ENCODE measurements at regions of chr1 and their contacts with region 1.

Region 1: GRCh38 chr1:145891587-145892485 is 6.2 kb upstream of the ANKRD35 start:
- DNase-seq: peak; percentile 97 to 99
- H3K4me3 ChIP-seq: peak overlapping the region; percentile 27; the same call in 1 of the 2 replicates
- H3K27ac ChIP-seq: peak overlapping the region; percentile 65
- H3K4me1 ChIP-seq: peaks cover 52% of the 10 kb centered on the region
- H3K27me3 ChIP-seq: no peaks in the 10 kb centered on the region
- CTCF ChIP-seq: peak; percentile 95

Region 2: DNA sequence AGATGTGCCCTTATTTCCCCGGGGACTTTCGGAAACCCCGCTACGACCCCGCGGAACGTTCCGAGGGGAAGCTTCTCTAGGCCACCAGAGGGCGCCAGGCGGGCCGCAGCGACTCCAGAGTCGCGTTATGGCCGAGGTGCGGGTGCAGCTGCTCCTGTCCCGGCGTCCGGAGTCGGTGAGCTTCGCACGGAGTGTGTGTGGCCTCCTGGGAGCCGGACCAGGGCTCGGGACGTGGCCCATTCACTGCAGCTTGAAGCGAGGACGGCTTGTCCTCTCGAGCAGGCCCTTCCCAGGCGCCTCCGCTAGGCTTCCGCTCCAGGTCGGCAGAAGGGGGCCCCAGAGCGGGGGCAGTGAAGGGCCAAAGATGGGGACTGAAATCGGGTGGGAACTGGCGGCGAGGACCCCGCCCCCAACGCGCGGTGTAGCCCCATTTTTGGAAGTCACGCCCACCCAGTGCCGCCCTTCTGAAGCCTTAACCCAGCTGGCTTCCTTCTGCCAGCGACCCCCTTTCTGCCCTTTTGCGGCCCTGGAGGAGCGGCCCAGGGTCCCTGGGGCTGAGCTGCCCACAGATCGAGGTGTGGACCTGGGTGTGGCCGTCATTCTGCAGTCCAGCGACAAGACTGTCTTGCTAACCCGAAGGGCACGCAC is 46.2 kb before region 1 on chr1 and contains the start of gene NUDT17:
- CTCF ChIA-PET with region 1: interaction called, 16 read pairs
- POLR2A ChIA-PET with region 1: interaction called, 6 read pairs
- intact Hi-C with region 1: loop called (anchors 1 kb)
- DNase-seq: peak; percentile 48 to 67
- H3K4me3 ChIP-seq: peak within 1 kb of the TSS; percentile 63
- H3K27ac ChIP-seq: no peak within 1 kb of the TSS
- H3K4me1 ChIP-seq: peaks cover 3% of the 10 kb centered on the region; the same call in 1 of the 2 replicates
- H3K27me3 ChIP-seq: no peaks in the 10 kb centered on the region
- CTCF ChIP-seq: peak; percentile 92
- total RNA-seq, gene NUDT17: 1.0 and 1.5 TPM in 2 replicates

Region 3: DNA sequence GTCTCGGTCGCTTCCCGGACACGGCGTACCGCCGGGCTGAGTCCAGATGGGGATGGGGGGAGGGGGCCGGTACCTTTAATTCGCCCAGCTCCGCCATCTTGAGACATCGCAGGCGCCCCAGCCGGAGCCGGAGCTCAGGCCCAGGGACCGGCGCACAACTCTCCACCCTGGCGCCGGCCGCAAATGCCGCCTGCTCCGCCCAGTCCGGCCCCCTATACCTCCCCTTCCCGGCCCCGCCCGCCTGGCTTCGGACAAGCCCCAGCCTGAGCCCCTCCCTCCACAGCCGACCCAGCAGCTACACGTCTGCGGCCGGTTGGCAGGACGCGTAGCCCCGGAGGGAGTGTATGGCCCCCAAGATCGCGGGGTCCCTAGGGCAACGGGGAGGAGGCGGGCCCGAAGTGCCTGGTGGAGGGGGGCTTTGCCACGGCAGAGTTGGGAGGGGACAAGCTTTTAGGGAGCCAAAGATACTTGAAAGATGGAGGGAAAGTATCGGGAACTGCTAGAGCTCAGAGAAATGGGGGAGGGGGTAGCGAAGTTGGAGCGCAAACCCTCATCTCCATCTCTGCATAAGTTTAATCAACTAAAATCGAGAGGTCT is 32.8 kb before region 1 on chr1 and contains the start of gene PIAS3:
- CTCF ChIA-PET with region 1: interaction called, 29 read pairs
- POLR2A ChIA-PET with region 1: interaction called, 19 read pairs
- intact Hi-C with region 1: loop called (anchors 1 kb)
- DNase-seq: peak; percentile 81 to 95
- H3K4me3 ChIP-seq: peak within 1 kb of the TSS; percentile 93
- H3K27ac ChIP-seq: peak within 1 kb of the TSS; percentile 23; the same call in 1 of the 2 replicates
- H3K4me1 ChIP-seq: peaks cover 8% of the 10 kb centered on the region
- H3K27me3 ChIP-seq: no peaks in the 10 kb centered on the region
- CTCF ChIP-seq: no peak
- total RNA-seq, gene PIAS3: 44.3 and 57.8 TPM in 2 replicates

Region 4: DNA sequence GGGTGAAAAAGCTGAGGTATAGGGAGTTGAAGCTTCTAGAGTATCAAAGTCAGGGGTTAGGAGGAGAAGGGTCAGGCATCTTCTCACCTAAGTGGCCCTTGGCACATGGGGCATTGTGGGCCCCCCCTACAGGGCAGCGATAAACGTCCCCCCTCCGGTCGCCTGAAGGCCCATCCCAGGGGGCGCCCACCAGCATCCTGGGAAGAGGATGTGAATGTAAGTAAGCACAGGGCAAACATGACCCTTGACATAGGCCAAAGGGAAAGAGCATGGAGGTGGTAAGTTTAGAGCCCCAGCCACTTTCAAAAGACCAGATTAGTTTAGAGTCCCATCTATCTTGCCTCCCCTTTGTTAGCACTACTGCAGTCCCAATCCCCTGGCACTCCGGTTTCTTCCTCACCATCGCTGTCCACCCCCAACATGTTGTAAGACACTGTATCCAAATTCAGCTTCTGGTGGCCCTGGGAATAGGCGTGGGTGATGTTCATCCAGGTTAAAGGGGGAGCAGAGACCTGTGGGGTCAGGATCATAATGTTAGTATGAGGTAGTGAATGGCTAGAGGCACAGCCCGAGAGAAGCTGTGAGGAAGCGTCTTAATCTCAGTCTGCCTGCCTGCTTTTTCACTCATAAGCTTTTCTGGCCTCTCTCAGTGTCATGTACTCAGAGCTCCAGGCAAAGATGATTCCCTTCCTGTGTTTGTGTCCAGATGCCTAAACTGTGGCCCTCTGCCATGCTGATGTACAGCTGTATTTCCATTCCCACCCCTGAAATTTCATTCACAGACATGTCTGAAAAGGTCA is 15.3 kb after region 1 on chr1:
- CTCF ChIA-PET with region 1: interaction called, 24 read pairs
- POLR2A ChIA-PET with region 1: no interaction called
- intact Hi-C with region 1: loop called (anchors 1 kb)
- DNase-seq: no peak
- H3K4me3 ChIP-seq: no peak overlapping the region
- H3K27ac ChIP-seq: no peak overlapping the region
- H3K4me1 ChIP-seq: 0 out of 2 replicates have a peak, but pooled peaks cover 3% of the 10 kb centered on the region
- H3K27me3 ChIP-seq: no peaks in the 10 kb centered on the region
- CTCF ChIP-seq: no peak

Region 5: DNA sequence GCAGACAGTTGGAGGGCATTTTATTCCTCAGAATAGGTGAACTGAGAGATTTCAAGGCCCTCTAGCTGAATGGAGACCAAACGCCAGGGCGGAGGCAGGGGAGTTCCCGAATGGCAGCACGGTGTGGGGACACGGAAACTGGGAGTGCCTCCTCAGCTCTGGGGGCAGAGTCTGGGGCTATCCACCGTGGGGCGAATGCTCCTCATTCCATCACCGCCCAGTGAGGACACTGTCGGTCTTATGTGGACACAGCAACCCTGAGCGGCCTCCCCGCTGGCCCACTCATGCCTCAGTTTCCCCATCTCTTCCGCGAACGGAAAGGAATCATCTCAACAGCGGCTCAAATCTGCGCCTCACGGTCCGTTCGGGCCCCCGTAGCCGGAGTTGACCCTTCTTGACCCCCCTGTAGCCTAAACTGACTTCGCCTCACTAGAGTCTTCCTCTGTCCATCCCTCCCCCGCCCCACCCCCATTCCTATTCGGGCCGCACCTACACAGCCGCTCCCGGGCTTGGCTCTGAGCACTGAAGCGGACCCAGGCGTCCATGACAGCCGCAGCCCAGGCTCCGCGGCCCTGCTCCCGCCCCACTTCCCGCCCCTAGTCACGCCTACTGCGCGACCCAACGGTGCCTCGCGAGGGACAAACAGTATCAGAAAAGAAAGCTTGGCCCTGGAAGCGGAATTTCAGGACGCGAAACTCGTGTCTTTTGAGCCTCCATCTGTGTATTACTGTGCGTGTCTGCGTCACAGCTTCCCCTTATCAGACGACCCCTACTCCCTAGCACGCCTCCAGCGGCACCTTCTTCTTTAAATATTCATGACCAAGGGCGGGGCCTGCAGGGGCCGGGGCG is 26.5 kb after region 1 on chr1 and contains the start of gene PEX11B:
- CTCF ChIA-PET with region 1: interaction called, 4 read pairs
- POLR2A ChIA-PET with region 1: no interaction called
- intact Hi-C with region 1: loop called (anchors 1 kb)
- DNase-seq: peak; percentile 66 to 83
- H3K4me3 ChIP-seq: peak within 1 kb of the TSS; percentile 80
- H3K27ac ChIP-seq: peak within 1 kb of the TSS; percentile 64
- H3K4me1 ChIP-seq: peaks cover 11% of the 10 kb centered on the region
- H3K27me3 ChIP-seq: no peaks in the 10 kb centered on the region
- CTCF ChIP-seq: no peak
- total RNA-seq, gene PEX11B: 19.7 and 19.8 TPM in 2 replicates

Region 6: GRCh38 chr1:145963995-145964901 is 72.4 kb after region 1 on chr1 and contains the starts of genes ANKRD34A and POLR3GL:
- CTCF ChIA-PET with region 1: interaction called, 3 read pairs
- POLR2A ChIA-PET with region 1: interaction called, 10 read pairs
- intact Hi-C with region 1: no loop called
- DNase-seq: peak; percentile 88 to 92
- H3K4me3 ChIP-seq: peak within 1 kb of the TSS; percentile 65
- H3K27ac ChIP-seq: peak within 1 kb of the TSS; percentile 8; the same call in 1 of the 2 replicates
- H3K4me1 ChIP-seq: peaks cover 26% of the 10 kb centered on the region
- H3K27me3 ChIP-seq: peaks cover 8% of the 10 kb centered on the region; the same call in 1 of the 2 replicates
- CTCF ChIP-seq: no peak
- total RNA-seq, gene ANKRD34A: 0.33 and 0.50 TPM in 2 replicates
- total RNA-seq, gene POLR3GL: 7.2 and 10.6 TPM in 2 replicates

Region 7: GRCh38 chr1:146007506-146008133 is 115.8 kb after region 1 on chr1:
- CTCF ChIA-PET with region 1: interaction called, 5 read pairs
- POLR2A ChIA-PET with region 1: interaction called, 8 read pairs
- intact Hi-C with region 1: loop called (anchors 1 kb)
- DNase-seq: no peak
- H3K4me3 ChIP-seq: no peak overlapping the region
- H3K27ac ChIP-seq: no peak overlapping the region
- H3K4me1 ChIP-seq: peaks cover 3% of the 10 kb centered on the region; the same call in 1 of the 2 replicates
- H3K27me3 ChIP-seq: no peaks in the 10 kb centered on the region
- CTCF ChIP-seq: peak; percentile 37; the same call in 1 of the 2 replicates

Measured in PC-9 (cell line).